ENCODE measurements at regions of chr7 and their contacts with region 1.

Region 1: GRCh38 chr7:100586266-100587025 is at the start of gene FBXO24:
- DNase-seq: peak; percentile 98 to 100 (median 99)
- ATAC-seq: peak; percentile 82
- H3K4me3 ChIP-seq: peak within 1 kb of the TSS; percentile 95
- H3K4me3 Mint-ChIP-seq: peak within 1 kb of the TSS; percentile 97
- H3K27ac ChIP-seq: peak within 1 kb of the TSS; percentile 93 to 96
- H3K27ac Mint-ChIP-seq: no peak within 1 kb of the TSS
- H3K4me1 ChIP-seq: peaks cover 50% of the 10 kb centered on the region
- H3K4me1 Mint-ChIP-seq: peaks cover 35% of the 10 kb centered on the region
- H3K27me3 ChIP-seq: peaks cover 0 to 5% of the 10 kb centered on the region in 2 experiments
- H3K27me3 Mint-ChIP-seq: no peaks in the 10 kb centered on the region
- CTCF ChIP-seq: no peak
- total RNA-seq, gene FBXO24: 0.66 to 0.78 TPM

Region 2: DNA sequence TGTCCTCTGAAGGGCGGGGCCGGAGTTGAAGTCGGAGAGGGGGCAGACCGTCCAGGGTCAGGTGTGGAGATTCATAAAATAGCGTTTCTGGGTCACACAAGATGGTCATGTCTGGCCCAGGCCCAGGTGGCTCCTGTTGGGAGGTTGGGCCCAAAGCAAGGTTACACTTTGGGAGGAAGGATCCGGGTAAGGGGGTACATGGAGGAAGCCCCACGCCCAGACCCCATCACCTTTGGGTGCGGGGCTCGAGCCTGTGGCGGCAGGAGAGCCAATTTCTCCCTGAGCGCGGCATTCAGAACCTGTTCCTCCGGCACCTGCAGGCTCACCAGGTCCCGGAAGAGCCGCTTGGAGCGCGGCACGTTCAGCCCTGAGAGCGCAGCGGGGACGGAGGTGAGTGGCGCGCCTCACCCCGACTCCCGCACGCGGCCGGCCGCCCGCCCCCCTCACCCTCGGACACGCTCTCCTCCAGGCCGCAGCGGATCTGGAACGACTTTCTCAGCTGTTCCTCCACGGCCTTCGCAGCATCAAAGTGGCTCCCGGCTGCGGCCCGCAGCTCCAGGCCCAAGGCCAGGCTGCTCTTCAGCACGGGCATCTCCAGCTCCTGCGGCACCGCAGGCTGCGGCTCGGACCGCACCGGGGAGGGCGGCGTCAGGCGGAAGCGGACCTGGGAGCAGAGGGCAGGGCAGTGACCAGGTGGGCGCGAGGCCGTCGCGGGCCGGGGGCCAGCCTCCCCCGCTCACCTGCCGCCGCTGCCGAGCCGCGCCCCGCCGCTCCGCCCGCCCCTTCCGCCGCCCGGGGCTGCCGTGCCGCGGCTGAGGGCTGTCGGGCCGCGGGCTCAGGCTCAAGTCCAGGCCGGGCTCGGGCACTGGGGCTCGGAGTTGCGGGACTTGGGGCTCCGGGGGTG is 150.8 kb before region 1 on chr7:
- CTCF ChIA-PET with region 1: no interaction called
- POLR2A ChIA-PET with region 1: interaction called, 91 read pairs
- intact Hi-C with region 1: no loop called
- DNase-seq: peak; percentile 29 to 77 (median 48)
- ATAC-seq: peak; percentile 48
- H3K4me3 ChIP-seq: peak overlapping the region; percentile 67
- H3K4me3 Mint-ChIP-seq: peak overlapping the region; percentile 95
- H3K27ac ChIP-seq: peak overlapping the region; percentile 87 to 90
- H3K27ac Mint-ChIP-seq: peak overlapping the region; percentile 100
- H3K4me1 ChIP-seq: peaks cover 57% of the 10 kb centered on the region
- H3K4me1 Mint-ChIP-seq: peaks cover 48% of the 10 kb centered on the region
- H3K27me3 ChIP-seq: no peaks in the 10 kb centered on the region
- H3K27me3 Mint-ChIP-seq: no peaks in the 10 kb centered on the region
- CTCF ChIP-seq: no peak

Region 3: DNA sequence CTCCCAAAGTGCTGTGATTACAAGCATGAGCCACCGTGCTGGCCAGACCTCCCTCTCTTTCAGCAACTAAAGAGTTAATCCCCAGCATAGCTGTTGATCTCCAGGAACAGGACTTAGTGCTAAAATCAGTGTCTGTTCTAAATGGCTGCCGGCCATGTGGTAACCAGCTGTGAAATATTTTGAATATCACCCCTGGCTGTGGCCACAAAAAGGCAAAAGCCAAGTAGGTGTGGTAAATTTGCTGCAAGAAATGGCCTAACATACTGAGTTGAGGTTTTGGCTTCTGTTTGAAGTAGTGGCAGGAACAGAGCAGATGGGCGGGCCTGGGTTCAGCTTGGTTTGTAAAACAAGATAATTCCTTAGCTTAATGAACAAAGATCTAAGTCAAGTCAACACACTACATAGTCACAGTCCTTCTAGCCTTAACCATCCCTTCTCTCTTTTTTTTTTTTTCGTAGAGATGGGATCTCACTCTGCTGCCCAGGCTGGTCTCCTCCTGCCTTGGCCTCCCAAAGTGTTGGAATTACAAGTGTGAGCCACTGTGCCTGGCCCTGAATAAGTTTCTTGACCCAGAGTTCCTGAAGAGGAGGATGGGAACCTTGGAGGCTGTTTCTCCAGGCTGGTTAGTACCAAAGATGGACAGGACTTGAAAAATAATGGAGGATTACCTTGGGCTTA is 70.2 kb before region 1 on chr7:
- CTCF ChIA-PET with region 1: no interaction called
- POLR2A ChIA-PET with region 1: interaction called, 10 read pairs
- intact Hi-C with region 1: no loop called
- DNase-seq: peak in 13 of 14 experiments; percentile 23 to 90 (median 48)
- ATAC-seq: peak; percentile 91
- H3K4me3 ChIP-seq: peak overlapping the region; percentile 1
- H3K4me3 Mint-ChIP-seq: peak overlapping the region; percentile 69
- H3K27ac ChIP-seq: peak overlapping the region in 1 of 2 donors; percentile 18
- H3K27ac Mint-ChIP-seq: peak overlapping the region; percentile 76
- H3K4me1 ChIP-seq: peaks cover 29% of the 10 kb centered on the region
- H3K4me1 Mint-ChIP-seq: peaks cover 38% of the 10 kb centered on the region
- H3K27me3 ChIP-seq: no peaks in the 10 kb centered on the region
- H3K27me3 Mint-ChIP-seq: no peaks in the 10 kb centered on the region
- CTCF ChIP-seq: no peak

Region 4: DNA sequence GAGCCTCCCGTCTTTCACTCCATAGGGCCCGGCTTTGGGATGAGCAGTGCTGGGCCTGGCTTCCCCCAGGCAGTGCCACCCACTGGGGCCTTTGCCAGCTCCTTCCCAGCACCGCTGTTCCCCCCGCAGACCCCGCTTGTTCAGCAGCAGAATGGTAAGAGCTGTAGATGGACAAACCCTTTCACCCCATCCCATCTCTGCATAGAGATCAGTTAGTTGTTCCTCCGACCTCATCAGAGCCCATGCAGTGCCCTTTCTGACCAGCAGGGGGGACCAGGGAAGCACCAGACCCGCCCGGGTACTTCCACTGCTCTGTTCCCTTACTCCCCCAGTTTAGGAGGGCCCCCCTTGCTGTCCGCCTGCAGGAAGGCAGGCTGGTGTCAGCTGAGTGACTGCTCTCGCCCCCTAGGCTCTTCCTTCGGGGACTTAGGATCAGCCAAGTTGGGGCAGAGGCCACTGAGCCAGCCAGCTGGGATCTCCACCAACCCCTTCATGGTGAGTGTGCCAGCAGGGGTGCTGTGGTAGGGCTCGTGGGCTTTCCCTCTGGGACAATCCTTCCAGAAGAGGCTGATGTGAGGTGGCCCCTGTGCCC is 22.5 kb before region 1 on chr7:
- CTCF ChIA-PET with region 1: interaction called, 8 read pairs
- POLR2A ChIA-PET with region 1: interaction called, 92 read pairs
- intact Hi-C with region 1: loop called in 1 of 2 experiments (anchors 1 kb)
- DNase-seq: peak; percentile 75 to 92 (median 84)
- ATAC-seq: peak; percentile 76
- H3K4me3 ChIP-seq: no peak overlapping the region
- H3K4me3 Mint-ChIP-seq: no peak overlapping the region
- H3K27ac ChIP-seq: no peak overlapping the region
- H3K27ac Mint-ChIP-seq: no peak overlapping the region
- H3K4me1 ChIP-seq: peaks cover 35% of the 10 kb centered on the region
- H3K4me1 Mint-ChIP-seq: peaks cover 34% of the 10 kb centered on the region
- H3K27me3 ChIP-seq: no peaks in the 10 kb centered on the region
- H3K27me3 Mint-ChIP-seq: no peaks in the 10 kb centered on the region
- CTCF ChIP-seq: peak; percentile 92

Region 5: GRCh38 chr7:100598425-100598824 is 12.0 kb after region 1 on chr7:
- CTCF ChIA-PET with region 1: interaction called, 5 read pairs
- POLR2A ChIA-PET with region 1: interaction called, 38 read pairs
- intact Hi-C with region 1: loop called in 1 of 2 experiments (anchors 2 kb)
- DNase-seq: no peak
- ATAC-seq: no peak
- H3K4me3 ChIP-seq: no peak overlapping the region
- H3K4me3 Mint-ChIP-seq: no peak overlapping the region
- H3K27ac ChIP-seq: no peak overlapping the region
- H3K27ac Mint-ChIP-seq: no peak overlapping the region
- H3K4me1 ChIP-seq: peaks cover 4% of the 10 kb centered on the region
- H3K4me1 Mint-ChIP-seq: peaks cover 3% of the 10 kb centered on the region
- H3K27me3 ChIP-seq: no peaks in the 10 kb centered on the region
- H3K27me3 Mint-ChIP-seq: no peaks in the 10 kb centered on the region
- CTCF ChIP-seq: no peak

Region 6: DNA sequence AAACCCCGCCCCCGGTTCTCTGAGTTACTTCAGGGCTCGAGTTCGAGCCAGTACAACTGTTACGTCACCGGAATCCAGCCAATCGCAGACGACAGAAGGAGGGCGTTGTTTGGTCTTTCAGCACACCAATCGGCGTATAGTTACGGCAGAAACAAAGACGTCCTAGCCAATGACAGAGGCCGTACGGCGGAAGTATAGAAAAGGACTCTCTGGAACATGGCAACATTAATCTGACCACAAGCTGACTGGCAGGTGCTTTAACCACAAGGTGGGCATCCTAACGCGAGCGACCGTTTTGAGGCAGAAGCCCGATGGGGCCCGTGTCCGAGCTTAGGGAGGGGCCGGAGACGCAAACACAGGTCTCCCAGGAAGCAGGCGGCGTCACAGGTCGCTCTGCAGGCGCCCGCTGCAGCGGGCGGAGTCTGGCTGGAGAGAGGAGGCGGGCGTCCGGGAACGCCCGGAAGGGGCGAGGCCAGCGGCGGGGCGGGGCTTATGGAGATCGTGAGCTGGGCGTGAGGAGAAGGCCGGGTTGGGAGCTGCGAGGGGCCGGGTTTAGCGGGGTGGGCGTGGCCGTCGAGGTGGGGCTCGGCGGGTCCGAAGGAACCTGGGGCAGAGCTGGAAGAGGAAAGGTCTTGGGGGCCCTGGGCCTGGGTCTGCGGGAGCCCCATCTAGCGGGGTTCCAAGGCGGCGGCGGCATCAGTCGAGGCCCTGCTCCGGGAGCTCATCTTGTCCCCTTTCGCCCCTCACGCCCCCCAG is 25.7 kb after region 1 on chr7 and contains the start of gene MOSPD3:
- CTCF ChIA-PET with region 1: interaction called, 5 read pairs
- POLR2A ChIA-PET with region 1: interaction called, 113 read pairs
- intact Hi-C with region 1: loop called in 1 of 2 experiments (anchors 1 kb)
- DNase-seq: peak; percentile 95 to 99 (median 98)
- ATAC-seq: peak; percentile 87
- H3K4me3 ChIP-seq: peak within 1 kb of the TSS; percentile 62
- H3K4me3 Mint-ChIP-seq: peak within 1 kb of the TSS; percentile 94
- H3K27ac ChIP-seq: peak within 1 kb of the TSS; percentile 78 to 92
- H3K27ac Mint-ChIP-seq: peak within 1 kb of the TSS; percentile 97
- H3K4me1 ChIP-seq: peaks cover 27% of the 10 kb centered on the region
- H3K4me1 Mint-ChIP-seq: peaks cover 31% of the 10 kb centered on the region
- H3K27me3 ChIP-seq: no peaks in the 10 kb centered on the region
- H3K27me3 Mint-ChIP-seq: no peaks in the 10 kb centered on the region
- CTCF ChIP-seq: no peak
- total RNA-seq, gene MOSPD3: 8.5 to 10.9 TPM

Region 7: GRCh38 chr7:100673300-100673941 is 87.0 kb after region 1 on chr7 and contains the start of gene GNB2:
- CTCF ChIA-PET with region 1: no interaction called
- POLR2A ChIA-PET with region 1: interaction called, 92 read pairs
- intact Hi-C with region 1: loop called (anchors 2 kb)
- DNase-seq: peak; percentile 91 to 99 (median 97)
- ATAC-seq: peak; percentile 51
- H3K4me3 ChIP-seq: peak within 1 kb of the TSS; percentile 94
- H3K4me3 Mint-ChIP-seq: peak within 1 kb of the TSS; percentile 99
- H3K27ac ChIP-seq: peak within 1 kb of the TSS; percentile 89 to 94
- H3K27ac Mint-ChIP-seq: peak within 1 kb of the TSS; percentile 92
- H3K4me1 ChIP-seq: peaks cover 33% of the 10 kb centered on the region
- H3K4me1 Mint-ChIP-seq: peaks cover 22% of the 10 kb centered on the region
- H3K27me3 ChIP-seq: no peaks in the 10 kb centered on the region
- H3K27me3 Mint-ChIP-seq: no peaks in the 10 kb centered on the region
- CTCF ChIP-seq: no peak
- total RNA-seq, gene GNB2: 87.8 to 91.9 TPM

Region 8: GRCh38 chr7:100763556-100764140 is 177.2 kb after region 1 on chr7:
- CTCF ChIA-PET with region 1: no interaction called
- POLR2A ChIA-PET with region 1: no interaction called
- intact Hi-C with region 1: no loop called
- DNase-seq: no peak
- ATAC-seq: no peak
- H3K4me3 ChIP-seq: no peak overlapping the region
- H3K4me3 Mint-ChIP-seq: no peak overlapping the region
- H3K27ac ChIP-seq: no peak overlapping the region
- H3K27ac Mint-ChIP-seq: no peak overlapping the region
- H3K4me1 ChIP-seq: no peaks in the 10 kb centered on the region
- H3K4me1 Mint-ChIP-seq: no peaks in the 10 kb centered on the region
- H3K27me3 ChIP-seq: no peaks in the 10 kb centered on the region
- H3K27me3 Mint-ChIP-seq: no peaks in the 10 kb centered on the region
- CTCF ChIP-seq: no peak

Region 9: GRCh38 chr7:101527844-101528667 is 941.6 kb after region 1 on chr7:
- CTCF ChIA-PET with region 1: no interaction called
- POLR2A ChIA-PET with region 1: no interaction called
- intact Hi-C with region 1: no loop called
- DNase-seq: no peak
- ATAC-seq: no peak
- H3K4me3 ChIP-seq: no peak overlapping the region
- H3K4me3 Mint-ChIP-seq: no peak overlapping the region
- H3K27ac ChIP-seq: no peak overlapping the region
- H3K27ac Mint-ChIP-seq: no peak overlapping the region
- H3K4me1 ChIP-seq: no peaks in the 10 kb centered on the region
- H3K4me1 Mint-ChIP-seq: no peaks in the 10 kb centered on the region
- H3K27me3 ChIP-seq: peaks cover 0 to 7% of the 10 kb centered on the region in 2 experiments
- H3K27me3 Mint-ChIP-seq: no peaks in the 10 kb centered on the region
- CTCF ChIP-seq: no peak

Measured in CD4-positive, alpha-beta T cell (primary cell).